WTC11 (cell line): ENCODE measurements at regions of chr11 and their contacts with region 1.

Region 1: DNA sequence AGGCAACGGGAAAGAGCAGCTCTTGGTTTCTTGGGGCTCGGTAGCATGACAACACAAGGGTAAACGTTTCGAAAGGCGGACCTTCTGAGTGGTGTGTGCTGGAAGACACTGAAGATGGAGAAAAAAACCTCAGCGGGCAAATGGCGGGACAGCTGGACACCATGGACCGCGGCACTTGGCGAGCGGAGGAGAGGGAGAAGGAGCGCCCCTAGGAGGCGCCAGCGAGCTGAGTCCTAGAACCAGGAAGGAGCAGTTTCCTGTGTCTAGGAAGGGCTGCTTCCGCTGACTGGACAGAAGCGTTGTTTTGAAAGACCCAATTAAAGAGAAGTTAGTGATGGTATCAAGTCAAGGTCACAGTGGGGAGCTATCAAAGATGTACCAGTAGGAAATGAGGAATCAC is 44.0 kb upstream of the OPCML start:
- DNase-seq: peak; percentile 86
- ATAC-seq: peak; percentile 69
- H3K4me3 Mint-ChIP-seq: no peak overlapping the region
- H3K27ac Mint-ChIP-seq: no peak overlapping the region
- H3K4me1 Mint-ChIP-seq: peaks cover 31% of the 10 kb centered on the region
- H3K27me3 Mint-ChIP-seq: no peaks in the 10 kb centered on the region; the same call in 1 of the 2 replicates
- CTCF ChIP-seq: peak; percentile 78

Region 2: GRCh38 chr11:133541021-133541719 is 35.2 kb before region 1 on chr11:
- CTCF ChIA-PET with region 1: interaction called, 19 read pairs
- POLR2A ChIA-PET with region 1: interaction called, 5 read pairs
- DNase-seq: peak; percentile 79
- ATAC-seq: peak; percentile 97
- H3K4me3 Mint-ChIP-seq: peak overlapping the region; percentile 48
- H3K27ac Mint-ChIP-seq: peak overlapping the region; percentile 91
- H3K4me1 Mint-ChIP-seq: peaks cover 68% of the 10 kb centered on the region
- H3K27me3 Mint-ChIP-seq: no peaks in the 10 kb centered on the region
- CTCF ChIP-seq: no peak

Region 3: DNA sequence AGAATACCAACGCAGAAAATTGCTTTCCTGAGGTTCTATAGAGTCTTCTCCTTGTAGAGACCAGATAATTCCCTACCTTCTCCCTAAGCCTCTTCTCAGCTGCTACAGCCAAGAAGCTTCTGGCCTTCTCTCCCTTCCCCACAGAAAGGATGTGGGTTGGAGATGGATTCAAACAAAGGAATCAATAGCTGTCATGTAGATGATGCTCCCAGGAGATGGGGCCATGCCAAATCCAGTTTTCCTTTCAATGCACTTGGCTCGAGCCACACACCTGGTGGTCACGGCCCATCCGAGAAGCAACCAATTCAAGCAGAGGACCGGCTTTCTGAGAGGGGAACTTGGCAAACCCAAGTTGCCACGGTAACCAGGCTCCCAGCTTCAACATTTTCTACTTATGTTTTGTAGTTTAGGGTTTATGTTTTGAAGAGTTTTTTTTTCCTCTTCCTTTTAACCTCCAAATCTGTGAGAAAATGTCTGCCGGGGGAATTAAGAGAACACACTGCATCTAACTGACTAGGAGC is 12.8 kb before region 1 on chr11:
- CTCF ChIA-PET with region 1: interaction called, 19 read pairs
- POLR2A ChIA-PET with region 1: interaction called, 3 read pairs
- DNase-seq: no peak
- ATAC-seq: no peak
- H3K4me3 Mint-ChIP-seq: no peak overlapping the region
- H3K27ac Mint-ChIP-seq: no peak overlapping the region
- H3K4me1 Mint-ChIP-seq: peaks cover 9% of the 10 kb centered on the region
- H3K27me3 Mint-ChIP-seq: no peaks in the 10 kb centered on the region
- CTCF ChIP-seq: no peak

Region 4: DNA sequence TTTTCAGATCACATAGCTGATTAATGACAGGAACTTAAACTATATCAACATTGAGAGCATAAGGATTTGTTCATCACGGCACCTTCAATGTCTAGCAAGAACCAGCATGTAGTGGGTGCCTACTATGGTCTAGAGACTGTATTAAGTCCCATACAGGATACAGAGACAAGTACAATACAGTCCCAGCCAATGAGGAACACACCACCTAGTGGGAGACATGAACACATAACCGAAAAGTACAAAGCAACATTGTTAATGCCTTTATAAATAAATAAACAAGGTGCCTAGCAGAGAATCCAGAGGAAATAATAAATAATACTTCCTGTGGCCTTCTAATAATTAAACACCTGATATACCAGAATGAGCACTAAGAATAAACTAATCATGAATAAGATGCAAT is 43.6 kb after region 1 on chr11:
- CTCF ChIA-PET with region 1: interaction called, 12 read pairs
- POLR2A ChIA-PET with region 1: no interaction called
- DNase-seq: no peak
- ATAC-seq: no peak; the same call in 1 of the 2 replicates
- H3K4me3 Mint-ChIP-seq: no peak overlapping the region
- H3K27ac Mint-ChIP-seq: no peak overlapping the region
- H3K4me1 Mint-ChIP-seq: peaks cover 9% of the 10 kb centered on the region
- H3K27me3 Mint-ChIP-seq: no peaks in the 10 kb centered on the region
- CTCF ChIP-seq: no peak

Region 5: GRCh38 chr11:133649040-133649439 is 72.7 kb after region 1 on chr11:
- CTCF ChIA-PET with region 1: no interaction called
- POLR2A ChIA-PET with region 1: no interaction called
- DNase-seq: no peak
- ATAC-seq: no peak
- H3K4me3 Mint-ChIP-seq: no peak overlapping the region
- H3K27ac Mint-ChIP-seq: no peak overlapping the region
- H3K4me1 Mint-ChIP-seq: peaks cover 9% of the 10 kb centered on the region
- H3K27me3 Mint-ChIP-seq: no peaks in the 10 kb centered on the region
- CTCF ChIP-seq: no peak